ENCODE measurements at regions of chr3 and their contacts with region 1.

Region 1: DNA sequence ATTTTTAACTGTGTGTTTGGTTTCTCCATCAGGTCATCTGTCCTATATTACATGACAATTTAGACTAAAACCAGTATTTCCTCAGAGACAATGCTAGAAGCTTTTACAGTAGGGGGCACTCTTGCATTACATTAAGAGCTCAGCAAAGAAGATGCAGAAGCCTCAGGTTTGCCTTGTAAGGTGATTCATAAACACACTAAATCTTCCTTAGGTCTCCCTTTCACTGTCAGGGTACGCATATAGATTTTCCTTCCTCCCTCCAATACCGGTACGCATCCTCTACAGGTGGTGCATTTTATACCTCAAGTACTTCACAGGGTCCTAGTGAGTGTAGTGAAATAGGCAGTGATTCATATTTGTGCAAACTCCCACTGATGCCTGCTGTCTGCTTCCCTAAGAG is 46.5 kb downstream of the CD86 start:
- DNase-seq: peak; percentile 92
- ATAC-seq: peak; percentile 66
- H3K4me3 ChIP-seq: peak overlapping the region; percentile 17; the same call in 1 of the 2 replicates
- H3K27ac ChIP-seq: peak overlapping the region; percentile 76
- H3K4me1 ChIP-seq: peaks cover 71% of the 10 kb centered on the region
- H3K27me3 ChIP-seq: no peaks in the 10 kb centered on the region
- CTCF ChIP-seq: peak; percentile 57 to 88 (median 70)
- EP300 ChIP-seq: no peak
- POLR2A ChIP-seq: no peak
- RAD21 ChIP-seq: peak; percentile 97

Region 2: DNA sequence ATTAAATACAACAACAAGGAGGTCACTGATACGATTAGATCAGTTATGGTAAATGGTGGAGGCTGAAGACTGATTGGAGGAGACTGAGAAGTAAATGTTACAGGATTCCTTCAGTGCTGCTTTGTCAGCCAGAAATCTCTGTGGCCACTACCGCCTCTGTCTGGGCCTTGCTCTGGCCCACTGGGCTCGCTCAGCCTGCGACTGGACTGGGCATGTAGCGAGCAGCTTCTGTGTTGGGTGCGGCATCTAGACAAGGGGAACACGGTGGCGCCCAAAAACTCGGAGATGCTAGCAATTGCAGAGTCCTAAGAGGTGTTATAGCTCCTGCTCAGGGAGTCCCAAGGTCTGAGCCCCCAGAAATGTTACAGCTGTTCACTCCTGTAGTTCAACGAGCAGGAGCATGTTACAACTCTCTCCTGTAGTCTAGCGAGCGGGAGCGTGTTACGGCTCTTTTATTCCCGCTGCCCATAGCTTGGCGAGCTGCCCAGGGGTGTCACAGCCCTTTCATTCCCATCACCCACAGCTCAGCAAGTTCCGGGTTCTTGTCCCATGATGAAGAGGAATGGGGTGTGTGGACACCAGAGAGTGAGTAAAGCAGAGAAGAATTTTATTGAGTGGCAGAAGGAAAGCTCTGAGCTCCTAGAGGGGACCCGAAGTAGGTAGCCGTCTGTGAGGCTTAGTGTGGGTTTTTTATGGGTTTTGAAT is 182.7 kb before region 1 on chr3:
- CTCF ChIA-PET with region 1: no interaction called
- POLR2A ChIA-PET with region 1: no interaction called
- RAD21 ChIA-PET with region 1: no interaction called
- SMC1A ChIA-PET with region 1: no interaction called
- in situ Hi-C with region 1: no loop called
- intact Hi-C with region 1: no loop called
- DNase-seq: no peak
- ATAC-seq: no peak
- H3K4me3 ChIP-seq: no peak overlapping the region
- H3K27ac ChIP-seq: no peak overlapping the region
- H3K4me1 ChIP-seq: no peaks in the 10 kb centered on the region
- H3K27me3 ChIP-seq: no peaks in the 10 kb centered on the region
- CTCF ChIP-seq: no peak
- EP300 ChIP-seq: no peak
- POLR2A ChIP-seq: no peak
- RAD21 ChIP-seq: no peak

Region 3: DNA sequence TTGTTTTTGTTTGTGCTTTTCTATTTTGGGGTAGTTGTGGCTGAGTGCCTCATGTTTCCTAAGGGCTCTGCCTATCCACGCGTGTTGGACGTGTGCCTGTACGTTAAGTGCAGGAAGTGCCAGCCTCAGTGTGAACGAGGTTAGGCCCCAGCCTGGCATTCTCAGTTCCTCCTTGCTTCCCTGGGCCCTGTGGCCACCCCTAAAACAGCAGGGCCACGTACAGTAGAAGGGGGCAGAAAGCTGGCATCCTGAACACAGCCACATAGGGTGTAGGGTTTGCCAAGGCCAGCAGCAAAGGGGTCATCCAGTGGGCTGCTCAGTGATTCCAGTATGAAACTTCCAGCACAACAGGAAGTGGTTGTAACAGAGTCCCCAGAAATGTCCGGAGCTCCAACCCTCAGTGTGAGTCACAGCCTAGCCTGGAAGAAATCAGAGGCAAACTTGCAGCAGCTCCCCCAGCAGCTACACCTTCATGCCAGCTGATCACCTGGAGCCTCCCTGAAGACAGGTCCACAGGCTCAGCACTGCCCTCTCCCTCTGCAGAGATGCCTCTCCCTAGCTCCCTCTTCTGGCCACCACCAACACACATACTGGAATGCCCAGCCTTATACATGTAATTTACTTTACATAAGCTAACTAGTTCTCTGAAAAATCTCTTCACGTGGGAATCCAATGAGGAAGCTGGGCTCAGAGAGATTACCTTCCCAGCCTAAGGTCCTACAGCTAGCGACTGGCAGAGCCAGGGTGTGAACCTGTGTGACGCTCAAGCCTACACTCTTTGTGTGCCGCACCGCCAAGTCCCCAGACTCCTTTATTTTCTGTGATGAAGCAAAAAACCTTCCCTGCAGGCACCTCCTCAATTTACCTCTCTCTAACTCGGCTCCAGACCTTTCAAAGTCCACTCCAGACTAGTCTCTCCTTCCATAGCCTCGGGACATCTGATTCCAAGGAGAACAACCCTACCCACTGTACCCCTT is 106.2 kb before region 1 on chr3:
- CTCF ChIA-PET with region 1: interaction called, 73 read pairs
- POLR2A ChIA-PET with region 1: interaction called, 3 read pairs
- RAD21 ChIA-PET with region 1: interaction called, 137 read pairs
- SMC1A ChIA-PET with region 1: interaction called, 882 read pairs
- in situ Hi-C with region 1: no loop called
- intact Hi-C with region 1: no loop called
- DNase-seq: peak; percentile 74
- ATAC-seq: peak; percentile 72
- H3K4me3 ChIP-seq: 0 out of 2 replicates have a peak overlapping the region, but pooled peaks have one; percentile 32
- H3K27ac ChIP-seq: peak overlapping the region; percentile 67
- H3K4me1 ChIP-seq: peaks cover 66% of the 10 kb centered on the region
- H3K27me3 ChIP-seq: no peaks in the 10 kb centered on the region
- CTCF ChIP-seq: peak; percentile 56 to 71 (median 59)
- EP300 ChIP-seq: no peak; a peak in 1 of 4 replicates
- POLR2A ChIP-seq: no peak
- RAD21 ChIP-seq: peak; percentile 59

Region 4: DNA sequence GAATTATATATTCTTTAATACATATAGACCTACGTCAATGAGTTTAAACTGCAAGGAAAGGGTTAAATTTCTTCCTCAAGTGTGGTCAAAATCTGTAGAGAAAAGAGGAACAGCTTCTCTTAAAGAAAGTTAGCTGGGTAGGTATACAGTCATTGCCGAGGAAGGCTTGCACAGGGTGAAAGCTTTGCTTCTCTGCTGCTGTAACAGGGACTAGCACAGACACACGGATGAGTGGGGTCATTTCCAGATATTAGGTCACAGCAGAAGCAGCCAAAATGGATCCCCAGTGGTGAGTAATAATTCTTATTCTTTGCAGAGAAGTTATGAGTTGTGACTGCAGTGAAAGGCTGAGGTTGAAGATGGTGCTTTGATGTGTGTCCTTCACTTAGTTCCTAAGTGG is 46.4 kb before region 1 on chr3 and contains the start of gene CD86:
- CTCF ChIA-PET with region 1: interaction called, 7 read pairs
- POLR2A ChIA-PET with region 1: interaction called, 6 read pairs
- RAD21 ChIA-PET with region 1: interaction called, 35 read pairs
- SMC1A ChIA-PET with region 1: interaction called, 11 read pairs
- in situ Hi-C with region 1: no loop called
- intact Hi-C with region 1: no loop called
- DNase-seq: peak; percentile 77
- ATAC-seq: peak; percentile 92
- H3K4me3 ChIP-seq: peak within 1 kb of the TSS; percentile 61
- H3K27ac ChIP-seq: peak within 1 kb of the TSS; percentile 45
- H3K4me1 ChIP-seq: peaks cover 13% of the 10 kb centered on the region
- H3K27me3 ChIP-seq: no peaks in the 10 kb centered on the region
- CTCF ChIP-seq: no peak
- EP300 ChIP-seq: peak in 1 of 2 experiments; percentile 68; a peak in 1 of 4 replicates
- POLR2A ChIP-seq: peak; percentile 79
- RAD21 ChIP-seq: peak; percentile 14; the same call in 1 of the 2 replicates
- polyA plus RNA-seq, gene CD86: 68.0 to 79.5 TPM

Region 5: GRCh38 chr3:122233101-122233952 is 131.7 kb after region 1 on chr3:
- CTCF ChIA-PET with region 1: interaction called, 26 read pairs
- POLR2A ChIA-PET with region 1: interaction called, 22 read pairs
- RAD21 ChIA-PET with region 1: interaction called, 123 read pairs
- SMC1A ChIA-PET with region 1: interaction called, 122 read pairs
- in situ Hi-C with region 1: no loop called
- intact Hi-C with region 1: loop called (anchors 1 kb)
- DNase-seq: peak; percentile 86
- ATAC-seq: peak; percentile 83
- H3K4me3 ChIP-seq: 0 out of 2 replicates have a peak overlapping the region, but pooled peaks have one; percentile 13
- H3K27ac ChIP-seq: peak overlapping the region; percentile 86
- H3K4me1 ChIP-seq: peaks cover 38% of the 10 kb centered on the region
- H3K27me3 ChIP-seq: no peaks in the 10 kb centered on the region
- CTCF ChIP-seq: 0 out of 6 replicates have a peak, but pooled peaks of 1 of the 3 experiments have one; percentile 1
- EP300 ChIP-seq: peak; percentile 57 to 68; a peak in 3 of 4 replicates
- POLR2A ChIP-seq: no peak
- RAD21 ChIP-seq: no peak

Region 6: GRCh38 chr3:122299872-122300460 is 198.3 kb after region 1 on chr3:
- CTCF ChIA-PET with region 1: interaction called, 81 read pairs
- POLR2A ChIA-PET with region 1: interaction called, 5 read pairs
- RAD21 ChIA-PET with region 1: interaction called, 81 read pairs
- SMC1A ChIA-PET with region 1: interaction called, 94 read pairs
- in situ Hi-C with region 1: loop called (anchors 5 kb)
- intact Hi-C with region 1: loop called (anchors 1 kb)
- DNase-seq: no peak
- ATAC-seq: peak; percentile 23; the same call in 1 of the 3 replicates
- H3K4me3 ChIP-seq: no peak overlapping the region
- H3K27ac ChIP-seq: peak overlapping the region; percentile 86
- H3K4me1 ChIP-seq: peaks cover 53% of the 10 kb centered on the region
- H3K27me3 ChIP-seq: no peaks in the 10 kb centered on the region
- CTCF ChIP-seq: peak; percentile 52 to 59 (median 57)
- EP300 ChIP-seq: no peak
- POLR2A ChIP-seq: no peak
- RAD21 ChIP-seq: peak; percentile 84

Region 7: GRCh38 chr3:122383771-122384697 is 282.4 kb after region 1 on chr3 and contains the start of gene FAM162A:
- CTCF ChIA-PET with region 1: interaction called, 12 read pairs
- POLR2A ChIA-PET with region 1: interaction called, 29 read pairs
- RAD21 ChIA-PET with region 1: interaction called, 21 read pairs
- SMC1A ChIA-PET with region 1: interaction called, 6 read pairs
- in situ Hi-C with region 1: no loop called
- intact Hi-C with region 1: loop called (anchors 10 kb)
- DNase-seq: peak; percentile 83
- ATAC-seq: peak; percentile 95
- H3K4me3 ChIP-seq: peak within 1 kb of the TSS; percentile 76
- H3K27ac ChIP-seq: peak within 1 kb of the TSS; percentile 82
- H3K4me1 ChIP-seq: peaks cover 16% of the 10 kb centered on the region
- H3K27me3 ChIP-seq: no peaks in the 10 kb centered on the region
- CTCF ChIP-seq: peak; percentile 55 to 77 (median 61); a peak in 5 of 6 replicates
- EP300 ChIP-seq: peak in 1 of 2 experiments; percentile 8; a peak in 1 of 4 replicates
- POLR2A ChIP-seq: peak; percentile 96
- RAD21 ChIP-seq: peak; percentile 38
- polyA plus RNA-seq, gene FAM162A: 290 to 297 TPM

Measured in GM12878 (cell line).